Gastrocnemius medialis (tissue), 4 donors: ENCODE measurements at regions of chr10 and their contacts with region 1.

Region 1: GRCh38 chr10:47181052-47181849 is 118.7 kb upstream of the GDF10 start:
- DNase-seq: no peak
- ATAC-seq: no peak
- H3K4me3 ChIP-seq: no peak overlapping the region
- H3K27ac ChIP-seq: no peak overlapping the region
- H3K4me1 ChIP-seq: peaks cover 0 to 22% of the 10 kb centered on the region in 2 donors
- H3K27me3 ChIP-seq: no peaks in the 10 kb centered on the region
- CTCF ChIP-seq: no peak
- POLR2A ChIP-seq: no peak

Region 2: DNA sequence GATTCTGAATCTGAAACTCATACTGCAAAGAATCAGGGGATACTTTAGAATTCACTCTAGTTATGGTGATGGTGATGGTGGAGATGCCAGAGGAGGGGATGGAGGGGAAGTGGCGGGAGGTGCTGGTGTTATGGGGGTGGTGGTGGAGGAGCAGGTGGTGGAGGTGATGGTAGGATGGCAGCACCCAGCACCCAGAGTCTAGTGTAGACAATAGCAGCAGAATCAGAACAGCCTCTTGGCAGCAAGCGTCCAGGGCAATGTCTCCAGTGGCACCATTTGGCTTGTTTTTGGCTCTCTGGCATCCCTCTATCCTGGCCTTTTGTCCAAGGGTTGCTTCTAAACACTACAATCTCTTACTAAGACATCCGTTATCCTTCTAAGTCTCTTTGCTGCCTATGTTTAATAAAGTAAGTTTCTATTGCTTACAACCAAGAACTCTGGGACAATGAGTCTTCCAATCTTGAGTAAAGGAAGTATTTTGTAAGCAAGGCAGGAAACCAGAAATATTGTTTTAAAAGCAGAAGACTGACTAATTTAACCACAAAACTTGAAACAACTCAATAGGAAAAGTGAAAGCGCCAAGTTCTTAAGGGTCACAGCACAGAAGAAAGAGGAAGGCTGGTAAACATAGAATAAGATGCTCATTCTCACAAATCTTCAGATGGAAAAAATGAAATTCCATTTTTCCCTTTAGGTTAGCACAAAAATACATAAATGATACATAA is 76.3 kb after region 1 on chr10:
- in situ Hi-C with region 1: no loop called
- intact Hi-C with region 1: loop called (anchors 10 kb)
- DNase-seq: no peak
- ATAC-seq: no peak
- H3K4me3 ChIP-seq: no peak overlapping the region
- H3K27ac ChIP-seq: no peak overlapping the region
- H3K4me1 ChIP-seq: peaks cover 12 to 16% of the 10 kb centered on the region in 2 donors
- H3K27me3 ChIP-seq: no peaks in the 10 kb centered on the region
- CTCF ChIP-seq: no peak
- POLR2A ChIP-seq: no peak